Activated T-helper 1 cell treated with anti-CD3 and anti-CD28 coated beads, Interleukin-12 subunit alpha, Interleukin-12 subunit beta, Interleukin-2, Interleukin-4 antibody, amounts not matched to agents 30 ng/mL and 10 ng/mL and 1 ng/mL, durations not matched to agents 14 hours and 24 hours and 36 hours (primary cell): ENCODE measurements at regions of chrX and their contacts with region 1.

Region 1: DNA sequence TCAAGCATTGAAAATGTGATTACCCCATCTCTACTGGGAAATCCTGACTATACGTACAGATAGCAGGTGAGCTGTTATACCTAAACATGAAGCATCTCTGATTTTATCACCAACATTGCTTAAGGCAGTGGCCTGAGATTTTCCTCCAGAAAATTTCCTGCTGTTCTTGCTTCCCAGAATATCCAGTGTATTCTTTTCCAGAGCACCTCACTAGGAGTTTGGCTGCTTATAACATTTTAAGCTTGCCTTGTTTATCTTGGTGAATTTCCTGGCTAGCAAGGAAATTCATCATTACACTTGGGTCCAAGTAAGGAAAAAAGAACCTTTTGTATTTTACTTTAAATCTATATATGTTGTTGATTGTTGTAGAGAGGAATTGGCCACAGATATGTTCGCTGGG is 73.0 kb upstream of the CLCN4 start:
- DNase-seq: no peak
- H3K4me3 Mint-ChIP-seq: no peak overlapping the region
- H3K27ac Mint-ChIP-seq: no peak overlapping the region
- H3K4me1 Mint-ChIP-seq: peaks cover 40% of the 10 kb centered on the region
- H3K27me3 Mint-ChIP-seq: no peaks in the 10 kb centered on the region

Region 2: GRCh38 chrX:9775930-9776329 is 307.9 kb before region 1 on chrX:
- intact Hi-C with region 1: no loop called
- DNase-seq: no peak
- H3K4me3 Mint-ChIP-seq: no peak overlapping the region
- H3K27ac Mint-ChIP-seq: no peak overlapping the region
- H3K4me1 Mint-ChIP-seq: no peaks in the 10 kb centered on the region
- H3K27me3 Mint-ChIP-seq: peaks cover 15% of the 10 kb centered on the region

Region 3: GRCh38 chrX:10011261-10011931 is 72.4 kb before region 1 on chrX:
- intact Hi-C with region 1: loop called (anchors 2 kb)
- DNase-seq: peak; percentile 19
- H3K4me3 Mint-ChIP-seq: peak overlapping the region; percentile 67
- H3K27ac Mint-ChIP-seq: peak overlapping the region; percentile 95
- H3K4me1 Mint-ChIP-seq: peaks cover 40% of the 10 kb centered on the region
- H3K27me3 Mint-ChIP-seq: peaks cover 3% of the 10 kb centered on the region

Region 4: GRCh38 chrX:10098270-10098713 is 14.5 kb after region 1 on chrX:
- intact Hi-C with region 1: loop called (anchors 1 kb)
- DNase-seq: peak; percentile 53
- H3K4me3 Mint-ChIP-seq: peak overlapping the region; percentile 79
- H3K27ac Mint-ChIP-seq: peak overlapping the region; percentile 87
- H3K4me1 Mint-ChIP-seq: peaks cover 34% of the 10 kb centered on the region
- H3K27me3 Mint-ChIP-seq: no peaks in the 10 kb centered on the region

Region 5: GRCh38 chrX:10111364-10112148 is 27.7 kb after region 1 on chrX:
- intact Hi-C with region 1: loop called (anchors 1 kb)
- DNase-seq: peak; percentile 14
- H3K4me3 Mint-ChIP-seq: peak overlapping the region; percentile 83
- H3K27ac Mint-ChIP-seq: peak overlapping the region; percentile 97
- H3K4me1 Mint-ChIP-seq: peaks cover 55% of the 10 kb centered on the region
- H3K27me3 Mint-ChIP-seq: no peaks in the 10 kb centered on the region